ENCODE measurements at regions of chr19 and their contacts with region 1.

Region 1: GRCh38 chr19:13604902-13605586 is 98.8 kb upstream of the CACNA1A start:
- DNase-seq: no peak
- H3K4me3 ChIP-seq: no peak overlapping the region
- H3K27ac ChIP-seq: no peak overlapping the region
- H3K4me1 ChIP-seq: no peaks in the 10 kb centered on the region
- H3K27me3 ChIP-seq: no peaks in the 10 kb centered on the region
- CTCF ChIP-seq: no peak

Region 2: GRCh38 chr19:13718733-13719132 is 113.7 kb after region 1 on chr19:
- intact Hi-C with region 1: loop called (anchors 10 kb)
- DNase-seq: peak in 3 of 5 donors; percentile 27 to 54 (median 42)
- H3K4me3 ChIP-seq: no peak overlapping the region
- H3K27ac ChIP-seq: no peak overlapping the region
- H3K4me1 ChIP-seq: no peaks in the 10 kb centered on the region
- H3K27me3 ChIP-seq: no peaks in the 10 kb centered on the region
- CTCF ChIP-seq: no peak

Region 3: DNA sequence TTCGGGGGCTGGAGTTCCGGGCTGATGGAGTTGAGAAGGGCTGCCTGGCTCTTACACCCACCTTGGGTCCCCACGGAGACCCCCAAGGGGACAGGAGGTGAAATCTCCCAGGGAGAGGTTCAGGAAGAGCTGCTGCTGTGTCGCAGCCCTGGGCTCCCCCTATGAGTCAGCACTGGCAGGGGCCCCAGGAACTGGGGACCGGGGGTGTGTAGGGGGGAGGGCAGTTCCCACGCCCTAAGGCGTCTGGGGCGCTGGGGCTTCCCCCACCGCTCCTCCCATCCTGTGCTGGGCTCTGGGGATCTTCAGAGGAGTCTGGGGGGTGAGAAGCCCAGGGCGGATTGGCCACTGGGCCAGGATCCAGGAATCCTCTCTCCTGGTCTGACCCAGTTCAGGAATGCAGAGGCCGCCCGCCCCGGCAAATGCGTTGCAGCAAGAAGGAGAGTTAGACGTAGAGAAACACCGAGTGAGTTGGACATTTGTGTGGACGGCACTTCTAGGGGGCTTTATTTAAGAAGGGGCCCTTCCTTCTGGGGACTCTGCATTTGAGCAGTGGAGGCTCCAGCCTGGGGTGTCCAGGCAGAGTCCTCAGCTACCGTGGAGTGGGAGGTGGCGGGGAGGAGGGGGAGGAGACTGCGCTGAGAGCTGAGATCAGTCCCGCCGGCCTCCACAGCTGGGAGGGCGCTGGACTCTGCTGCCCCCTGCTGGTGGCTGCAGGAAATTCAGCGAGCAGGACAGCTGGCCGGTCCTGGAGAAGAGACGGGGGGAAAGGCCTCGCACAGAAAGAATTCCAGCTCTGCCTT is 256.9 kb after region 1 on chr19:
- intact Hi-C with region 1: loop called (anchors 10 kb)
- DNase-seq: peak; percentile 95 to 97 (median 97)
- H3K4me3 ChIP-seq: peak overlapping the region; percentile 48 to 65 (median 60)
- H3K27ac ChIP-seq: peak overlapping the region; percentile 80 to 94
- H3K4me1 ChIP-seq: peaks cover 0 to 18% (median 7%) of the 10 kb centered on the region in 3 donors
- H3K27me3 ChIP-seq: no peaks in the 10 kb centered on the region
- CTCF ChIP-seq: peak; percentile 100

Measured in kidney (tissue), 22 donors.